ENCODE measurements at regions of chr1 and their contacts with region 1.

Region 1: DNA sequence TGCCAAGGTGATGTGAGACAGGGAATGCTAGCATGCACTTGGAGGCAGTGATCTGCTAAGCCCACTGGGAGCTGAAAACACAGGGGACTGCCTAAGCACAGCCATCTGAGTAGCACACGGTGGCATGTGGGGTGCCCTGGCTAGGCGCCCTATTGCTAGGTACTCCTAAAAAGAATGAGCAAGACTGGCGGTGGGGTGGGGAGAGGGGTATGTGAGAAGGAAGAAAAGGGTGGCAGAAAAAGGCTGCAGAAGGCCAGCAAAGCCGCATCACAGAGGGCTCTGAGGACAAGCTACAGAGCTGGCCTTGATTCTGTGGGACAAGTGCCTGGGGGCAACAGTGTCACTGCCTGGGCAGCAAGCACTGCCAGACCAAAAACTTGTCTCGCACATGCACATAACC is 23.8 kb downstream of the PARP1 start:
- DNase-seq: no peak
- H3K4me3 ChIP-seq: no peak overlapping the region
- H3K27ac ChIP-seq: no peak overlapping the region; the same call in 1 of the 2 replicates
- H3K4me1 ChIP-seq: no peaks in the 10 kb centered on the region
- H3K27me3 ChIP-seq: no peaks in the 10 kb centered on the region
- CTCF ChIP-seq: no peak
- EP300 ChIP-seq: no peak
- POLR2A ChIP-seq: no peak
- RAD21 ChIP-seq: no peak

Region 2: DNA sequence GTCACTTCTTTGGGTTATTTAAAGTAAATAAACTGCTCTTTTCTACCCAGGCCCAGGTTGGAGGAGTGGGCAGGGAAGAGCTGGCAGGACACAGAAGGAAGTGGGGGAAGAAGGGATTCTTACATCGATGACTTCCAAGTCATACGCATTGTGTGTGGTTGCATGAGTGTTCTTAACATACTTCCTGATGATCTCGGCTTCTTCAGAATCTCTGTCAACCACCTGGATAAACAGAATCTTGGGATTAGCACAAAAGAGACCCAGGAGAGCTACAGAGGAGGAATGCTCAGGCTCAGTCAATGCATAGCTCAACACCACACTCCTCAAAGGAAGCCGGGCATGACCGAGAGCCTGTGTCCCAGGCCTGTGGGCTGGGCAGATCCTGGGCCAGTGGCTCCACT is 18.2 kb before region 1 on chr1:
- CTCF ChIA-PET with region 1: interaction called, 7 read pairs
- POLR2A ChIA-PET with region 1: interaction called, 13 read pairs
- DNase-seq: no peak
- H3K4me3 ChIP-seq: no peak overlapping the region
- H3K27ac ChIP-seq: no peak overlapping the region
- H3K4me1 ChIP-seq: no peaks in the 10 kb centered on the region
- H3K27me3 ChIP-seq: no peaks in the 10 kb centered on the region
- CTCF ChIP-seq: no peak
- EP300 ChIP-seq: no peak
- POLR2A ChIP-seq: no peak
- RAD21 ChIP-seq: no peak

Region 3: GRCh38 chr1:226891846-226892523 is 507.9 kb after region 1 on chr1:
- CTCF ChIA-PET with region 1: no interaction called
- POLR2A ChIA-PET with region 1: no interaction called
- DNase-seq: no peak
- H3K4me3 ChIP-seq: no peak overlapping the region
- H3K27ac ChIP-seq: no peak overlapping the region
- H3K4me1 ChIP-seq: no peaks in the 10 kb centered on the region
- H3K27me3 ChIP-seq: no peaks in the 10 kb centered on the region
- CTCF ChIP-seq: no peak
- EP300 ChIP-seq: no peak
- POLR2A ChIP-seq: no peak
- RAD21 ChIP-seq: no peak

Measured in H1 (cell line).